Activated naive CD4-positive, alpha-beta T cell treated with anti-CD3 and anti-CD28 coated beads, Interleukin-2, amount 10 ng/mL, durations not matched to agents 7 days and 5 days (primary cell): ENCODE measurements at regions of chr22 and their contacts with region 1.

Region 1: DNA sequence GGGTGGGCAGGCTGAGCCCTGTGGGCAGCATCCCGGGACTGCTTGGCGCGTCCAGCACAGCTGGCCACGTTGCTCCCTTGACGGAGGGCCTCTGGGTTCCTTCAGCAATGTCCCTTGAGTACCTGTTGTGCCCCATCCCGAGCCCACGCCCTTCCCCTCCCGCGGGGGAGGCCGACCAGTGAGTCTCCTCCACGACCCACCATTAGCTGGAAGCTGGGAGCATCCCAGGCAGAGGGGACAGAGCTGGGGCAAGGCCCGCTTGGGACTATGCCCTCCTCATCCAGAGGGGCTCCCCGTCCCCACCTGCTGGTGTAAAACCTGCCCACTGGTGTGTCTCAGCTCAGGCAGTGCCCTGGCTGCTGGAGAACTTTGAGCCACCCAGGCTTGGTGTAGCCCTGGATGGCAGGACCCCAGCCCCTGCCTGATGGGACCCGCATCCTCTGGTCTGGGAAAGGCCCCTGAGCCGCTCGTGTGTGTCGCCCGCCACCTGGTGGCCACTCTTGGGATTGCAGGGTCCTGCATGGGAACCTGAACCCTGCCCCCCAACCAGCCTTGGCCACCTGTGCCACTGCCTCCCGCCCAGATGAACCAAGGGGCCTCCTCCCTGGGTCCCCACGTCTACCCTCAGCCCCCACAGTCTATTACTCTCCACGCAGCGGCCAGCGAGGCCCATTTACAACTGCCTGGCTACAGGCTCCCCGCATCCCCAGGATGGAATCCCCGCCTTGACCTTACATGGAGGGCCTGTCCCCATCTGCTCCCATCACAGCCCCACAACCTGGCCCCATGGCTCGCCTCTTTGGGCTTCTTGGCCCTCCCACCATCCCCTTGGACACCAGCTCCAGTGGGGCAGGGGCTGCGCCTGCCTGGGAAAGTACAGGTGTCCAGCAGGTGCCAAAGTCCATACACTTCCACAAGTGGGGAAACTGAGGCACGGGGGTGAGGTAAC is 16.6 kb upstream of the ARHGAP8 start:
- DNase-seq: peak; percentile 87
- H3K4me3 Mint-ChIP-seq: no peak overlapping the region
- H3K27ac Mint-ChIP-seq: no peak overlapping the region
- H3K4me1 Mint-ChIP-seq: no peaks in the 10 kb centered on the region
- H3K27me3 Mint-ChIP-seq: no peaks in the 10 kb centered on the region

Region 2: DNA sequence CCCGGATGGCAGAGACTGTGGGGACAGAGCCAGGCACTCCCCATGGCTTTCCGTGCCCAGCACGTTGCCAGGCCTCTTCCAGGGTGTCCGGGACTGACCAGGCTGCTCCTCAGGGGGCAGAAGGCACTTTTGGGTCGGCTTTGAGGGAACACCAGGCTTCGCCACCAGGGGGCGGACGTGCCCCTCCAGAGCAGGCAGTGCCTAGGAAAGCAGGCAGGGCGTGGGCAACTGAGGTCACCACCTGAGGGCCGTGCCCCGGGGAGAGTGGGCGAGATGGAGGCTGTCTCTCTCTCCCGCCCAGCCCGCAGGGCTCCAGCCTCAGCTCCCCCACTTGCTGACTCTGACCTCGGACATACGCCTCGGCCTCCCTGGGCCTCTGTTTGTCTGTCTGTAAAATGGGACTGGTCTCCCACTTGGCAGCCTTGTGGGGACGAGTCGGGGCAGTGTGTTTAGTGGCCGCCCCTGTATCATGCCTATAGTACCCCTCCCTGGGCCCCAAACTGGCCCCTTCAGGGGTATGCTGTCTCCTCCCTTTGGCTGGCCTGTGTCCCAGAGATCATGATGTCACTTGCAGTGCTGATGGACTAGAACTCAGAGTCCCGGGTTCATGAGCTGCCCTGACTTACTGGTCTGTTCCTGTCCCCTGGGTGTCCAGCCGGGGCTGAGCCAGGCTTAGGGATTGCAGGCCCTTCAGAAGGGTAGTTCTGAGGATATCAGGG is 38.2 kb before region 1 on chr22:
- CTCF ChIA-PET with region 1: interaction called, 28 read pairs
- DNase-seq: peak; percentile 88
- H3K4me3 Mint-ChIP-seq: no peak overlapping the region
- H3K27ac Mint-ChIP-seq: no peak overlapping the region
- H3K4me1 Mint-ChIP-seq: peaks cover 9% of the 10 kb centered on the region
- H3K27me3 Mint-ChIP-seq: peaks cover 26% of the 10 kb centered on the region